Left ventricle myocardium inferior (tissue), 1 donor: ENCODE measurements at regions of chr4 and their contacts with region 1.

Region 1: GRCh38 chr4:102610007-102610406 is 108.8 kb downstream of the NFKB1 start:
- DNase-seq: no peak
- H3K4me3 ChIP-seq: no peak overlapping the region
- H3K27ac ChIP-seq: no peak overlapping the region
- H3K4me1 ChIP-seq: peaks cover 21% of the 10 kb centered on the region
- H3K27me3 ChIP-seq: no peaks in the 10 kb centered on the region
- CTCF ChIP-seq: peak; percentile 21

Region 2: GRCh38 chr4:102449751-102450352 is 160.2 kb before region 1 on chr4:
- intact Hi-C with region 1: loop called (anchors 10 kb)
- DNase-seq: no peak
- H3K4me3 ChIP-seq: no peak overlapping the region
- H3K27ac ChIP-seq: no peak overlapping the region
- H3K4me1 ChIP-seq: no peaks in the 10 kb centered on the region
- H3K27me3 ChIP-seq: no peaks in the 10 kb centered on the region
- CTCF ChIP-seq: peak; percentile 73

Region 3: DNA sequence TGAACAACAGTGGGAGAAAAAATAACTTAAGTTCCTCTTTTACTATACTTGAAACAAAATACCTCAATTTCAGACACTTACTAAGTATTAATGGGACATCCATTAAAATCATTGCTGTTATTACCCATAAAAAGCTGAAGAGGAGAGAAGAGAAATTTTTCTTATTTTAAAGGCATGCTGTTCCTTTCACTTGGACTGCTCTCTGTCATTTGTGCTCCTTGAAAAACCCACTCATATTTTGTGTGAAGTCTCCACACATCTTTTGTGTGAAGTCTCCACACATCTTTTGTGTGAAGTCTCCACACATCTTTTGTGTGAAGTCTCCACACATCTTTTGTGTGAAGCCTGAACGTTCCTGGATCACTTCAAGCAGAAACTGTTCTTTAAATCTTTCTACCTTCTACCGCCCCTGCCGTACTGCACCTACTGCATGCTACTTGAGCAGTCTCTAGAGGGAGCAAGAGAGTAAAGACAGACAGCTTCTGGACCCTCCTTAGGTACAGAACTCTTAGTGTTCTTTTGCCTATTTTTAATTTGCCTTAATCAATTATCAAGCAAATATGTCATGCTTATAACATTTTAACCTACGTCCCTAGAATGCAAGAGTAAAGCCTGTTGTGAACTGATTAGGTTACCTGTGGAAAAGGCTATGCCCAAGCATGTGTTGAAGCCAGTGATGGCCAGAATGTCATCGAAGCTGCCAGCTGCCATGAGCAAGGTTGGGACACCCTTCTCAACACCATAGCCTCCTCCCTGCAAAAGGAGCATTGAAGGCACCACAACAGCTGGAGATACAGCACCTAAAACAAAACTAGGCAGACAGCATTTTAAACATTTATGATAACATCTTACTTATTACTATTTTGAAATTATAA is 436.6 kb after region 1 on chr4:
- intact Hi-C with region 1: no loop called
- DNase-seq: no peak
- H3K4me3 ChIP-seq: no peak overlapping the region
- H3K27ac ChIP-seq: no peak overlapping the region
- H3K4me1 ChIP-seq: no peaks in the 10 kb centered on the region
- H3K27me3 ChIP-seq: no peaks in the 10 kb centered on the region
- CTCF ChIP-seq: peak; percentile 77